IMR-90 (cell line): ENCODE measurements at regions of chr10 and their contacts with region 1.

Region 1: GRCh38 chr10:88582806-88583583 is at the start of gene RNLS:
- DNase-seq: peak; percentile 15
- ATAC-seq: peak; percentile 96
- H3K4me3 ChIP-seq: peak within 1 kb of the TSS; percentile 59
- H3K27ac ChIP-seq: peak within 1 kb of the TSS; percentile 46
- H3K4me1 ChIP-seq: no peaks in the 10 kb centered on the region
- H3K27me3 ChIP-seq: no peaks in the 10 kb centered on the region
- CTCF ChIP-seq: peak; percentile 55
- POLR2A ChIP-seq: no peak
- RAD21 ChIP-seq: peak; percentile 31; the same call in 1 of the 2 replicates
- total RNA-seq, gene RNLS: 4.2 and 7.0 TPM in 2 replicates

Region 2: DNA sequence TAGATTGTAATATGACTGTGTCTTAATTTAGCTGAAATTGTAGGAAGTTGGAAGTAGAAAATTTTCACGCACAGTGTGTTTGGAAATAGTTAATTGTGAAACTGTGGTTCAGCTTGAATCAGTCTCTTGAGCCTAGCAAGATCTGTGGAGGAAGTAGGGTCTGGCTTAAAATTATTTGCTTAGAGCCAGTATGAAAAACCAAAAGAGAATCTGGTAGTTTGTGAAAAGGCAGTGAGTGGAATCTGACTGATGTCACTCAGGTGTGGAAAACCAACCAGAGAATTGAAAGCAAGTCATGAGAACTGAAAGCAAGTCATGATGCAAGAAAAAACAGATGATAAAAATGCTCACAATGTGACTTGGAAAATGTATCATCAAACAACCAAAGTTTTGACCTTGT is 15.1 kb after region 1 on chr10:
- CTCF ChIA-PET with region 1: interaction called, 13 read pairs
- POLR2A ChIA-PET with region 1: no interaction called
- dilution Hi-C with region 1: no loop called
- in situ Hi-C with region 1: no loop called
- intact Hi-C with region 1: no loop called
- DNase-seq: no peak
- ATAC-seq: no peak
- H3K4me3 ChIP-seq: no peak overlapping the region
- H3K27ac ChIP-seq: no peak overlapping the region
- H3K4me1 ChIP-seq: no peaks in the 10 kb centered on the region
- H3K27me3 ChIP-seq: no peaks in the 10 kb centered on the region
- CTCF ChIP-seq: no peak
- POLR2A ChIP-seq: no peak
- RAD21 ChIP-seq: no peak

Region 3: DNA sequence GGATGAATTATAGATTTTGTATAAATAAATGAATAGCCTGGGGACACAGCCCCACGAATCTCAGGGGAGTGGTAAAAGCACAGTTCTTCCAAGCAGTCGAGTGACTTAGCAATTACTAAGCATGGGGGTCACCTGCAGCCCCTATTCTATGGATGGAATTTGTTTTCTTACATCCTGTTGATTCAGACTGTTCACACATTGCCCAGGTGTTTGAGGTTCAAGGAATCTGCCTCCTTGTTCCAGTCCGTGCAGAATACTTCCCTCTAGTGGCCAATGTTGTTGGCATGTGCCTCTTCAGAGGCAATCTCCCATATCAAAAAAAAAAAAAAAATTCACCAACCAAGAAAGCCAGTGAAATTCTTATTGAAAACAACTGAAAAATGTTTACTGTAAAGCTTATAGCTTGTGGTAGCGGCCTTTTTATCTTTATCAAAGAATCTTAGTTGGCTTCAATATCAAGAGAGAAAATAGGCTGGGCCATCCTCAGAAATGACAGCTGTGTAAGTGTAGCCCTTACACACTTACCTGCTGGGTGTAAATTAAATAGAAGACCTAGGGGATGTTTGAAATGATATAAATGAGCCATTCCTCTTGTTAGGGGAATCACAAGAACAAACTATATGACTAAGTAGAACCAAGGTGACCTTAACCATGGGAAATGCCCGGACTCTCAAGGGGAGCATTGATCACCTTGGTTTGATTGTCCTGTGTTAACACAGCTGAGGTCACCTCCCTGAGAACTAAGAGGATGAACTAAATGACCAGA is 227.4 kb after region 1 on chr10:
- CTCF ChIA-PET with region 1: interaction called, 3 read pairs
- POLR2A ChIA-PET with region 1: no interaction called
- dilution Hi-C with region 1: no loop called
- in situ Hi-C with region 1: no loop called
- intact Hi-C with region 1: loop called (anchors 5 kb)
- DNase-seq: peak; percentile 72
- ATAC-seq: peak; percentile 75
- H3K4me3 ChIP-seq: no peak overlapping the region
- H3K27ac ChIP-seq: no peak overlapping the region
- H3K4me1 ChIP-seq: no peaks in the 10 kb centered on the region
- H3K27me3 ChIP-seq: peaks cover 8% of the 10 kb centered on the region
- CTCF ChIP-seq: peak; percentile 79
- POLR2A ChIP-seq: no peak
- RAD21 ChIP-seq: peak; percentile 67